Naive thymus-derived CD4-positive, alpha-beta T cell (primary cell): ENCODE measurements at regions of chr5 and their contacts with region 1.

Region 1: GRCh38 chr5:27434335-27434734 is 395.9 kb upstream of the CDH9 start:
- DNase-seq: no peak
- ATAC-seq: no peak
- H3K4me3 ChIP-seq: no peak overlapping the region
- H3K4me3 Mint-ChIP-seq: no peak overlapping the region
- H3K27ac ChIP-seq: no peak overlapping the region
- H3K27ac Mint-ChIP-seq: no peak overlapping the region
- H3K4me1 ChIP-seq: no peaks in the 10 kb centered on the region
- H3K4me1 Mint-ChIP-seq: no peaks in the 10 kb centered on the region
- H3K27me3 ChIP-seq: no peaks in the 10 kb centered on the region
- H3K27me3 Mint-ChIP-seq: no peaks in the 10 kb centered on the region

Region 2: GRCh38 chr5:28666110-28666509 is 1231.8 kb after region 1 on chr5:
- CTCF ChIA-PET with region 1: no interaction called
- POLR2A ChIA-PET with region 1: no interaction called
- intact Hi-C with region 1: loop called in 1 of 2 experiments (anchors 5 kb)
- DNase-seq: no peak
- ATAC-seq: no peak
- H3K4me3 ChIP-seq: no peak overlapping the region
- H3K4me3 Mint-ChIP-seq: no peak overlapping the region
- H3K27ac ChIP-seq: no peak overlapping the region
- H3K27ac Mint-ChIP-seq: no peak overlapping the region
- H3K4me1 ChIP-seq: no peaks in the 10 kb centered on the region
- H3K4me1 Mint-ChIP-seq: no peaks in the 10 kb centered on the region
- H3K27me3 ChIP-seq: no peaks in the 10 kb centered on the region
- H3K27me3 Mint-ChIP-seq: no peaks in the 10 kb centered on the region